ENCODE measurements at regions of chr11 and their contacts with region 1.

Region 1: DNA sequence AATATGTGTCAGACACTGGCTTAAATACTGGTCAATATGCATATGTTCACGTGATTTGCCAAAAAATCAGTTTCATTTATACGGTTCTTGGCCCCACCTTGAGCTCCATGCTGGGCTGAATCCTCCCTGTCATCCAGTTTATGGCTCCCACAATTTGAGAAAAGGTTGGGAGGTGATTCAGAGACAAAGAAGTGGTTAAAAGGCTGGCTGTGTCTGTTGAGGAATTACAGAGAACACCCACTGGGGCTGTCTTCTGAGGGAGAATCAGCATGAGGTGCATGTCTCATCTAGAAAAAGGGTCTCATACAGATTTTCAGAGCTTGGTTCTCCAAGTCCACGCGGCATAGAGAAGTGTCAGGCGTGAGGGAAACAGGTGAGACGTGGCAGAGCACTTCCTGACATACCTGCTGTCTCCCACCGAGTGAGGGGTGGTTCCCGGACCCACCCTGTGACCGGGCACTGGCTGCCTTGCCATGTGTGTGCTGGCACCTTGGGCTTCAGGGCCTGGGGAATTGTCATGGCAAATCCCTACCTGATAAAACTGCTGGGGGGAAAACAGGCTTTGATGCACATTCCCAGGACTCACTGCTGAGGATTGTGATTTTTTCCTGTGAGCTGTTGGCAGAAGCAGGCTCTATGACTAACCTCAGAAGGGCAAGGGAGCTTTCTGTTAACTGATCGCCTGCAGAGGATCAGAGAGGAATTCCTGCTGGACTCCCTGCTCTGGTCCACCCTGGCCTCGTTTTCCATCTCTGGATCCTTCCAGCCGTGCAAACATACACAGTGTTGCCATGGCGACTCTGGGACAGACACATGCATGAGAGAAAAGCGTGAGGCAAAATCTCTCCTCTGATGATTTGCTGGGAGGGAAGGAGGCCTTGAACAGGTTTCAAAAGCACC is 223.6 kb downstream of the ADAMTS15 start:
- DNase-seq: peak; percentile 81 to 85
- ATAC-seq: peak; percentile 73
- H3K4me3 ChIP-seq: no peak overlapping the region
- H3K27ac ChIP-seq: peak overlapping the region in 1 of 2 donors; percentile 92
- H3K4me1 ChIP-seq: peaks cover 6 to 8% of the 10 kb centered on the region in 2 donors
- H3K27me3 ChIP-seq: no peaks in the 10 kb centered on the region

Region 2: GRCh38 chr11:130609121-130610035 is 62.7 kb before region 1 on chr11:
- intact Hi-C with region 1: loop called in 1 of 2 experiments (anchors 5 kb)
- DNase-seq: peak; percentile 92
- ATAC-seq: peak; percentile 90
- H3K4me3 ChIP-seq: no peak overlapping the region
- H3K27ac ChIP-seq: peak overlapping the region; percentile 5 to 91
- H3K4me1 ChIP-seq: peaks cover 0 to 3% of the 10 kb centered on the region in 2 donors
- H3K27me3 ChIP-seq: no peaks in the 10 kb centered on the region

Region 3: DNA sequence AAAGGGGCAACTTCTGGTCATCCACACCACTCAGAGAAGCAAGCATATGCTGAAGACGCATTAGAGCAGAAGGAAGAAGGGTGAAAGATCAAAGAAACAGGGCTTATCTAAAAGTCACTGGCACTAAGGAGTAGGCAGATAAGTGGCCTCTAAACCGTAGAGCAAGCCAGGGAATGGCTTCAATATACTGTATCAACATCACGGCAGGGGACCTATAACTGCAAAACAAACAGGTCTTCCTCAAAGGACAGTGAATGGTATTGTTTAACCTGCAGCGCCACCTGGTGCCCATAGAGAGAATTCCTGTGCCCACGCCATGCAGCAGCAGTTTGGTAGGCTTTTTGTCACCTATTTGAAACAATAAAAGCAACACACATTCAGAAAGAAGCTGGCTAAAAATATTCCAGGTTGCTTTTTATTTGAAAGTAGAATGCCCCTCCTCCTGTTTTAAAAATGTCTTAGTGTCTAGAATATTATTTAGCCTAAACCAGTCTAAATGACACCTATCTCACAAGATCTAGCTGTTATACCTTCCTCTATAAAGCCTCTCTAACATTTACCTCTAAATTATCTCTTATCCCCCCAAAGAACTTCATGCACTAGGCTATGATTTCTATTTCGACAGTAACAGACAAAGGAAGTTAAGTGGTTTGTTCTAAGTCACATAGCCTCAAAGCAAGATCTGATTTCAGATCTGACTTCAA is 222.4 kb after region 1 on chr11:
- intact Hi-C with region 1: loop called in 1 of 2 experiments (anchors 10 kb)
- DNase-seq: peak; percentile 70 to 87
- ATAC-seq: peak; percentile 73
- H3K4me3 ChIP-seq: no peak overlapping the region
- H3K27ac ChIP-seq: peak overlapping the region; percentile 16 to 90
- H3K4me1 ChIP-seq: peaks cover 0 to 2% of the 10 kb centered on the region in 2 donors
- H3K27me3 ChIP-seq: no peaks in the 10 kb centered on the region